ENCODE measurements at regions of chr1 and their contacts with region 1.

Region 1: DNA sequence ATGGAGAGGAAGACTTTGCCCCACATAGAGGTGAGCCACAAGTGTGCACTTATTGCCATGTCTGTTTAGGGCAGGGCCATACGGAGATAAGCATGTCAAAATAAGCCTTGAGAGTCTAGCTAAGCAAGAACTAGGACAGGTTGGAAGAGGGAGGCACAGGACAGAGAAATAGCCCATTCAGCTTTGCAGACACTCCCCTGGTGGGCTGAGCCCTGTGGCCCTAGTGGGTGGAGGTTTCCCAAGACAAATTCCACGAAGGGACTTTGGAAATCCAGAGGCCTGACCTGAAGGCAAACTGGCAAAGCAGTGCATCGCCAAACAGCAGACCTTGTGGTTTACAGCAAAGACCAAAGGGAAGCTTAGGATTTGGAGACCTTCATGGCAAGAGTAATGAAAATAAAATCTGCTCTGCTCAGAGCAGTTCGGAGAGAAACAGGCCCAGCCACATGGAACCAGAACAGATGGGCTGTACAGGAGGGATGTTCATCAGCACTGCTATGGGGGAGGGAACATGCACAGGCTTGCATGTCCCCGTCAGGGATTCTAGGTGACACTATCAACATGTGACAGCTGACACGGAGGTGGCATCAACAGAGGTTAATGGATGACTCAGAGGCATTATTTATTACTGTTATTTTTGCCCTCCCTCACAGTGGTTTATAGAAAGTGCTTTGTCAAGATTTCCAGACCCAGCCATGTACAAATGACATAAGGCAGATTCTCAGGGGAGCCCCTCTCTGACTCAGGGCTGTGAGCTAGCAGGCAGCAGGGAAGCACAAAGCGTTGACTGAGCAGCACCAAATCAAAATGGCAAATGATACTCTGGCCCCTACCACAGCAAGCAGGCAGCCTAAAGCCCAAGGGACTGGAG is 90.1 kb upstream of the IRF2BP2 start:
- DNase-seq: peak; percentile 74 to 86 (median 82)
- ATAC-seq: peak; percentile 76
- H3K4me3 ChIP-seq: no peak overlapping the region
- H3K27ac ChIP-seq: peak overlapping the region; percentile 24; the same call in 2 of the 3 replicates
- H3K4me1 ChIP-seq: peaks cover 19 to 39% of the 10 kb centered on the region in 2 experiments; a peak in 4 of 5 replicates
- H3K27me3 ChIP-seq: no peaks in the 10 kb centered on the region
- CTCF ChIP-seq: no peak
- EP300 ChIP-seq: peak; percentile 79
- POLR2A ChIP-seq: no peak
- RAD21 ChIP-seq: 0 out of 4 replicates have a peak, but pooled peaks of 1 of the 2 experiments have one; percentile 6

Region 2: GRCh38 chr1:234710936-234711724 is 11.1 kb after region 1 on chr1:
- CTCF ChIA-PET with region 1: no interaction called
- POLR2A ChIA-PET with region 1: interaction called, 19 read pairs
- in situ Hi-C with region 1: no loop called
- intact Hi-C with region 1: no loop called
- DNase-seq: no peak
- ATAC-seq: no peak
- H3K4me3 ChIP-seq: no peak overlapping the region
- H3K27ac ChIP-seq: no peak overlapping the region
- H3K4me1 ChIP-seq: peaks cover 18 to 19% of the 10 kb centered on the region in 2 experiments
- H3K27me3 ChIP-seq: no peaks in the 10 kb centered on the region
- CTCF ChIP-seq: no peak
- EP300 ChIP-seq: no peak
- POLR2A ChIP-seq: no peak
- RAD21 ChIP-seq: no peak

Region 3: GRCh38 chr1:234716908-234717375 is 16.9 kb after region 1 on chr1:
- CTCF ChIA-PET with region 1: no interaction called
- POLR2A ChIA-PET with region 1: interaction called, 27 read pairs
- in situ Hi-C with region 1: no loop called
- intact Hi-C with region 1: no loop called
- DNase-seq: no peak
- ATAC-seq: no peak
- H3K4me3 ChIP-seq: no peak overlapping the region
- H3K27ac ChIP-seq: no peak overlapping the region
- H3K4me1 ChIP-seq: peaks cover 11 to 36% of the 10 kb centered on the region in 2 experiments; a peak in 4 of 5 replicates
- H3K27me3 ChIP-seq: no peaks in the 10 kb centered on the region
- CTCF ChIP-seq: no peak
- EP300 ChIP-seq: no peak
- POLR2A ChIP-seq: no peak
- RAD21 ChIP-seq: no peak